GM12878 (cell line): ENCODE measurements at regions of chr1 and their contacts with region 1.

Region 1: DNA sequence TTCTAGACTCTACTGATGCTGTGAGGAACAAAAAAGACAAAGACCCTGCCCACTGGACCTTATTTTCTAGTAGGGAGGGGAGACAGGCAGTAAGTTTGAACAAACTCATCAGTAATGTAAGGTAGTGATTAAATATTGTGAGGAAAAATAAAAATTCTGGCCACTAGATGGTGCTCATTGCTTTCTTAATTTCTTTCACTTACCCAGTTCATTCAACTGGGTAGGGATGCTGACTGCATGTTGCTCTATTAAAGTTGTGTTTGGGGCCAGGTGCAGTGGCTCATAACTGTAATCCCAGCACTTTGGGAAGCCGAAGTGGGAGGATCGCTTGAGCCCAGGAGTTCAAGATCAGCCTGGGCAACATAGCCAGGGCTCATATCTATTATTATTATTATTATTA is 6.3 kb upstream of the KYAT3 start:
- DNase-seq: no peak
- ATAC-seq: peak; percentile 98
- H3K4me3 ChIP-seq: no peak overlapping the region
- H3K27ac ChIP-seq: no peak overlapping the region
- H3K4me1 ChIP-seq: peaks cover under 1% of the 10 kb centered on the region
- H3K27me3 ChIP-seq: no peaks in the 10 kb centered on the region
- CTCF ChIP-seq: peak; percentile 24 to 64 (median 28); a peak in 4 of 6 replicates
- EP300 ChIP-seq: no peak
- POLR2A ChIP-seq: no peak
- RAD21 ChIP-seq: peak; percentile 76

Region 2: DNA sequence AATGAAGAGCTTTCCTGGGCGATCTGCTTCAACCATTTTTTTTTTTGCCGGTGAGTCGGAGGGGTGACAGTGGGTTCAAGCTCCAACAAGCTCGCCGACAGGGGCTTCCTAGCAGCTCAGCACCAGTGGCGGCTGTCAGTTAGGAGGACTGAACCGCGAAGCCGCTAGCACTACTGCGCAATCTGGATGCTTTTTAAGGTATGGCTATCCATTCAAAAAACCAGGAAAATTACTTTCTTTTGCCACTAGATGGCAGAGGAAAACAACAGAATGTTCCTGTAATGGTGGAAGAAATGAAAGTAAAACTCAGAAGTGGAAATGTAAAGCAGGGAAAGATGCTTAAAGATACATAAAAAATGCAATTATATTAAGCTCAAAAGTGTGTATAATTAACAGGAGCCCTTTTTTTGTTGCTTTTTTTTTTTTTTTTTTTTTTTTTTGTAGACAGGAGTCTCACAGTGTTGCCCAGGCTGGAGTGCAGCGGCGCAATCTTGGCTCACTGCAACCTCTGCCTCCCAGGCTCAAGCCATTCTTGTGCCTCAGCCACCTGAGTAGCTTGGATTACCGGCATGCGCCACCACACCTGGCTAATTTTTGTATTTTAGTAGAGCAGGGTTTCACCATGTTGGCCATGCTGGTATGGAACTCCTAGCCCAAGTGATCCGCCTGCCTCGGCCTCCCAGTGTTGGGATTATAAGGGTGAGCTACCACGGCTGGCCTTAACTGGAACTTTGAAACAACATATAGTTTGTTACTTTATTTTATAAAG is 14.7 kb before region 1 on chr1:
- CTCF ChIA-PET with region 1: interaction called, 20 read pairs
- POLR2A ChIA-PET with region 1: interaction called, 10 read pairs
- RAD21 ChIA-PET with region 1: interaction called, 6 read pairs
- SMC1A ChIA-PET with region 1: interaction called, 8 read pairs
- in situ Hi-C with region 1: no loop called
- intact Hi-C with region 1: no loop called
- DNase-seq: no peak
- ATAC-seq: peak; percentile 54
- H3K4me3 ChIP-seq: no peak overlapping the region
- H3K27ac ChIP-seq: peak overlapping the region; percentile 27; the same call in 1 of the 2 replicates
- H3K4me1 ChIP-seq: peaks cover 7% of the 10 kb centered on the region
- H3K27me3 ChIP-seq: no peaks in the 10 kb centered on the region
- CTCF ChIP-seq: peak; percentile 44 to 55 (median 45); a peak in 5 of 6 replicates
- EP300 ChIP-seq: no peak
- POLR2A ChIP-seq: no peak
- RAD21 ChIP-seq: peak; percentile 43

Region 3: DNA sequence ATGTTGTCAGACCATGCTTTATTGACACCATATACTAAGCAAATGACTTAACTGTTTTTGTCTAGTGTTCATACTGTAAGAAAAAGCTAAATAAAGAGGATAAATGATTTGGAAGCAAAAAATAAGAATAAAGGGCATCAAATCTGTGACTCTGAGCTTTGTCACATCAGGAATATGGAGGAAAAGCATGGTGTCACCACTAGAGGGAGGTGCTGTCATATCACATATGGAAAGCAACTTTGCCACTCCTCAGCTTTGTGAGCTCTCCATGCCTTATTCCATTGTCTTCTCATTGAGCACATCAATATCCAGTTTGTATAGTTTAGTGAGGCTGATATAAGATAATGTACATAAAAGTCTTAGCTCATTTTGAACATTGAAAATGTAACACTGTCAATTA is 87.1 kb after region 1 on chr1:
- CTCF ChIA-PET with region 1: interaction called, 13 read pairs
- POLR2A ChIA-PET with region 1: no interaction called
- RAD21 ChIA-PET with region 1: interaction called, 10 read pairs
- SMC1A ChIA-PET with region 1: interaction called, 5 read pairs
- in situ Hi-C with region 1: no loop called
- intact Hi-C with region 1: loop called (anchors 2 kb)
- DNase-seq: no peak
- ATAC-seq: peak; percentile 71
- H3K4me3 ChIP-seq: no peak overlapping the region
- H3K27ac ChIP-seq: no peak overlapping the region
- H3K4me1 ChIP-seq: no peaks in the 10 kb centered on the region
- H3K27me3 ChIP-seq: no peaks in the 10 kb centered on the region; a peak in 1 of 4 replicates
- CTCF ChIP-seq: peak; percentile 56 to 72 (median 61); a peak in 5 of 6 replicates
- EP300 ChIP-seq: no peak
- POLR2A ChIP-seq: no peak
- RAD21 ChIP-seq: peak; percentile 79

Region 4: DNA sequence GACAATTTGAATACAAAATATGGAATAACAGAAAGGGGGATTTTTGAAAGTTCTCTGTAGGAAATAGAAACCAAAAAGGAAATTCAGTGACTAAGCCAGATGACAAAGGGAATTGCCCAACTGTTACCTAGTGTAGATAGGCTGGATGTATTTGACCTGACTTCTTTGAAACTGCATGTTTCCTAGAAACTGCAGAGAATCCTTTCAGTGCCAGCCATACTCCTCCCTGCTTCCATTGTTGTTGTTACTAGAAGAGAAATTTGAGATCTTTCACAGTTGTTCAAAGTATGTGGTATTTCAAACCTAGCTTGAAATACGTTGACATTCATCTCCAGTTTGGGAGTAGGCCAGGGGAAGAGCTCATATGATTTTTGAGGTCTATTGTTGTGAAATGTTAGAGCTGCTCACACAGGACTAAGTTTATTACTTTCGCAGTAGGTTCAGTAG is 275.7 kb after region 1 on chr1:
- CTCF ChIA-PET with region 1: interaction called, 3 read pairs
- POLR2A ChIA-PET with region 1: no interaction called
- RAD21 ChIA-PET with region 1: interaction called, 4 read pairs
- SMC1A ChIA-PET with region 1: interaction called, 4 read pairs
- in situ Hi-C with region 1: no loop called
- intact Hi-C with region 1: loop called (anchors 1 kb)
- DNase-seq: no peak
- ATAC-seq: 0 out of 3 replicates have a peak, but pooled peaks have one; percentile 26
- H3K4me3 ChIP-seq: no peak overlapping the region
- H3K27ac ChIP-seq: no peak overlapping the region
- H3K4me1 ChIP-seq: no peaks in the 10 kb centered on the region
- H3K27me3 ChIP-seq: no peaks in the 10 kb centered on the region
- CTCF ChIP-seq: no peak
- EP300 ChIP-seq: no peak
- POLR2A ChIP-seq: no peak
- RAD21 ChIP-seq: no peak